ENCODE measurements at regions of chr11 and their contacts with region 1.

Region 1: DNA sequence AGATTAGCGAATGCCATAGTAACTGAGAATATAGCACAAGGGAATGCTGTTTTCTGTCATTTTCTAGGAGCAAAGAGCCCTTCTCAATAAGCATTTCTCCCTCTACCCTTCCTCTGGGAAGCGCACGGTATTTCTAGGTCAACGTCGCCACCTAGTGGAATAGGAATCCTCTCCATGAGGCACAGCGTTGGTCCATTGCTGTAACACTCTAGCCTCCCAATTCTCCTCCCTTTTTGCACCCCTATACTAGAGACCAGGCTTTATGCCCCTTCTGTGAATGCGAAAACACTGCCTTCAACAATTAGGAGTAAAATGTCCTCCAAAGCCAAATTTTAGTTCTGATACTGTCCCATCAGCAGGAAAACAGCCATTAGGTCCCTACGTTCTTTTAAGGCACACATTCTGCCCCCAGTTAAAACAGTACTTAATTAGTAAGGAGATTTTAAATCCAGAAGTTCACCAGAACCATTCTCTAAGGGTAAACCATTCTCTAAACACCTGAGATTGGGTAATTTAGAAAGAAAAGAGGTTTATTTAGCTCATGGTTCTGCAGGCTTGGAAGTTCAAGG is 12.8 kb upstream of the HYLS1 start:
- DNase-seq: no peak
- H3K4me3 Mint-ChIP-seq: no peak overlapping the region
- H3K27ac Mint-ChIP-seq: no peak overlapping the region
- H3K4me1 Mint-ChIP-seq: no peaks in the 10 kb centered on the region
- H3K27me3 Mint-ChIP-seq: peaks cover 9% of the 10 kb centered on the region

Region 2: GRCh38 chr11:125423247-125423849 is 451.3 kb before region 1 on chr11:
- intact Hi-C with region 1: loop called (anchors 1 kb)
- DNase-seq: no peak
- H3K4me3 Mint-ChIP-seq: no peak overlapping the region
- H3K27ac Mint-ChIP-seq: no peak overlapping the region
- H3K4me1 Mint-ChIP-seq: no peaks in the 10 kb centered on the region
- H3K27me3 Mint-ChIP-seq: no peaks in the 10 kb centered on the region

Region 3: GRCh38 chr11:125429166-125429707 is 445.4 kb before region 1 on chr11:
- intact Hi-C with region 1: loop called (anchors 2 kb)
- DNase-seq: peak; percentile 10
- H3K4me3 Mint-ChIP-seq: no peak overlapping the region
- H3K27ac Mint-ChIP-seq: no peak overlapping the region
- H3K4me1 Mint-ChIP-seq: no peaks in the 10 kb centered on the region
- H3K27me3 Mint-ChIP-seq: peaks cover 2% of the 10 kb centered on the region

Region 4: GRCh38 chr11:125724125-125724524 is 150.5 kb before region 1 on chr11:
- intact Hi-C with region 1: loop called (anchors 10 kb)
- DNase-seq: no peak
- H3K4me3 Mint-ChIP-seq: no peak overlapping the region
- H3K27ac Mint-ChIP-seq: no peak overlapping the region
- H3K4me1 Mint-ChIP-seq: no peaks in the 10 kb centered on the region
- H3K27me3 Mint-ChIP-seq: peaks cover 11% of the 10 kb centered on the region

Measured in activated T-helper 1 cell treated with anti-CD3 and anti-CD28 coated beads, Interleukin-12 subunit alpha, Interleukin-12 subunit beta, Interleukin-2, Interleukin-4 antibody, amounts not matched to agents 30 ng/mL and 10 ng/mL and 1 ng/mL, durations not matched to agents 14 hours and 24 hours and 36 hours (primary cell).